ENCODE measurements at regions of chr19 and their contacts with region 1.

Region 1: DNA sequence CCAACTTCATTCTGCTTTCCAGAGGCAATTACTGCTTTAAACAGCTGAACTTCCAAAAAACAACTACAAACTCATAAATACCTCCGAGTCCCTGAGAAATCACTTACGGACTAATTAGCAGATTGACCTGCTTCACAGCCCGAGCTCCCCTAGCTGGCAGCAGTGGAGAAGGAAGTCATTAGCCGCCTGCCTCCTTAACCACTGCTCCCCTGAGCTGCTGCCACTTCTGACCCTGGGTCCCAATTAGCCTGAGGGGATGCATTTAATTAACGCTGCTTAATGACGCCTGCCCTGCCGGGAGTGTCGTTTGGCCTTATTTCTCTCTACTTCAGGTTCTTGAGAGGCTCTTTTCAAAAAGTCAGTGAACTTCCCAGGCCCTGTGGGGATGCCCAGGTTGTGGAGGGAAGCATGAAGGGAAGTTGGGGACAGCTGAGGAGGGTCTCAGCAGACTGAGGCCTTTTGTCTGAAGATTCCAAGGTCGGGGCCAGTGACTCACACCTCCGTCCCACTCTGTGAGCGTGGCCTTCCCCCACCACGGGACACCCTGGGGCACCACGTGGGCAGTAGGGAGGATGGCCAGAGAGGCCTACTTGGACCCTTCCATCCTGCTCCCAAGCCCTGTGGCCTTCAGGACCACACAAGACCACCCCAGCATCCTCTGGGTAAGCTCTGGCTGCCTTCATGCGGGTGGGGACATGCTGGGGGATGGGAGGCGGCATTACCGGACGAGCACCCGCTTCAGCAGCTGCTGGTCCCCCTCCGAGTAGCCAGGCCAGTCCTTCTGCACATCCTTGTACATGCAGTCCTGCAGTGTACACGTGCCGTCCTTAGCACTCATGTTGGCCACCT is 19.8 kb upstream of the ISYNA1 start:
- DNase-seq: no peak
- H3K4me3 ChIP-seq: no peak overlapping the region
- H3K27ac ChIP-seq: no peak overlapping the region
- H3K4me1 ChIP-seq: peaks cover 9 to 15% of the 10 kb centered on the region in 2 experiments; a peak in 3 of 4 replicates
- H3K27me3 ChIP-seq: no peaks in the 10 kb centered on the region
- CTCF ChIP-seq: no peak
- EP300 ChIP-seq: no peak
- RAD21 ChIP-seq: no peak

Region 2: DNA sequence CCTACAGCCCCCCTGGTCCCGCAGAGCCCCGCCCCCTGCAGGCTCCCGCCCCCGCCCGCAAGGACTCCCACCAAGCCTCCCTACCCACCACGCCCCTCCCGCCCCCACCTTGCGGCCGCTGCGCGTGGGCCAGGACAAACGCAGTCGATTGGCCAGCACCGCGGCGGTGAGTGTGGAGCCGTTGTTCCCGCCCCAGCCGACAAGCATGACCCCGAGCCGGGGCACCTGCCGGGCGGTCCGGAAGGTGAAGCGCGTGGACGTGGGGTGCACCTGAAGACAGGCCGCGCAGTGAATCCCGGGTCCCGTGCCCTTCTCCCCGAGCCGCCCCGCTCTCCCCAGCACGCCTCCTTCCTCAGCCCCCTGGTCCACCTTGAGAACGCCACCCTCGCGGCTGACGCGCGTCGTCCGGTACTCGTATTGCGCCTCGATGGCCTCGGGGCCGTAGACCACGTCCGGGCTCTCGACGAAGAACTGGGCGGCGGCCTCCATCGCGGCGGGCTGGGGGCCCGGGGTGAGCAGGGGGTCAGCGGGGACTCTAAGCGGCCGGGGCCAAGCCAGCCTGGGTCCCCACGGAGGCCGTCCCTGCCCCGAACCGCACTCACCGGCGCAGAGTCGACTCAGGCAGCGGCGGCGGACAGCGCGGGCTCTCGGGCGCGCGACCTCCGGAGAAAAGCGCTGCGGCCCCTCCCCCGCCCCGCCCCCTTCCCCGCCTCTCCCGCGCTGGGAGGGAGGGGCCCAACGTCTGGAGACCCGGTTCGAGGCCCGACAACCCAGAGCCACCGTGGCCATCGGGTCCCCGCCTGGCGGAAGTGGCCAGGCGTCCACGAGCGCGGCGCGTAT is 20.0 kb before region 1 on chr19 and contains the start of gene ISYNA1:
- CTCF ChIA-PET with region 1: interaction called, 215 read pairs
- POLR2A ChIA-PET with region 1: no interaction called
- DNase-seq: peak; percentile 94
- H3K4me3 ChIP-seq: peak within 1 kb of the TSS; percentile 62 to 65
- H3K27ac ChIP-seq: peak within 1 kb of the TSS; percentile 32 to 82; a peak in 3 of 4 replicates
- H3K4me1 ChIP-seq: peaks cover 0 to 25% of the 10 kb centered on the region in 2 experiments; a peak in 2 of 4 replicates
- H3K27me3 ChIP-seq: no peaks in the 10 kb centered on the region
- CTCF ChIP-seq: no peak
- EP300 ChIP-seq: no peak
- RAD21 ChIP-seq: no peak
- polyA plus RNA-seq, gene ISYNA1: 48.0 and 49.4 TPM in 2 replicates

Region 3: GRCh38 chr19:18478569-18479311 is 21.0 kb after region 1 on chr19:
- CTCF ChIA-PET with region 1: interaction called, 63 read pairs
- POLR2A ChIA-PET with region 1: no interaction called
- DNase-seq: peak; percentile 70
- H3K4me3 ChIP-seq: no peak overlapping the region
- H3K27ac ChIP-seq: peak overlapping the region; percentile 60 to 63
- H3K4me1 ChIP-seq: peaks cover 21 to 28% of the 10 kb centered on the region in 2 experiments; a peak in 2 of 4 replicates
- H3K27me3 ChIP-seq: no peaks in the 10 kb centered on the region
- CTCF ChIP-seq: no peak
- EP300 ChIP-seq: no peak
- RAD21 ChIP-seq: no peak

Region 4: DNA sequence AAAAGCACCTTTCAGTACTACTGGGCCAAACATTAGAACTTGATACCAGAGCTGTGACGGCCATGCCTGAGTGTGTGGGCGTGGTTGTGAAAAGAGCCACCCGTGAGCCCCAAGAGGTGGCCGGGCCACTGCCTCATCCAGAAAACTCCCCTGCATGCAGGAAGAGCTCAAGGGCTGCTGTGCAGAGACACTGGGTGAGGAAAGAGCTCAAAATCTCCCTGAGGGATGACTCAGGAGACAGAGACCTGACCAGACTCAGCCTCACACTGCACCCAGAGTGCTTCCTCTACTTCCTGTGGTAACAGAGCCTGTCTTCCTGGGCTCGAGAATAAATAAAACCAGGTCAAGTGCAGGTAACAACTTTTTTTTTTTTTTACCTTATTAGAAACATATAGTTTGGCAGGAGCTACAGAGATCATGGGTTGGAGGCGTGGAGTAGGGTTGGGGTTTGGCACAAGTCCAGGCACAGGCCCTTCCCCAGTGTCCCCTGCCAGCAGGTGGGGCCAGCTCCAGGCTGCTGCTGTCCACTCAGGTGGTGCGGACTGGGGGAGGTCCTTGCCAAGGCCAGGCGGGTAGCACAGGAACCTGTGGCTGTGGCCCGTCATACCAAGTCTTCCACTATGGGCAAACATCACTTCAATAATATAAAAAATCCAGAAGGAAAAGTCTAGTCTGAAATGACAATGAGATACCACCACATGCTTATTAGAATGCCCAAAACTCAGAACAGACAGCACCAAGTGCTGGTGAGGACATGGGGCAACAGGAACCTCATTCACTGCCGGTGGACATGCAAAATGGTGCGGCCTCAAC is 38.7 kb after region 1 on chr19:
- CTCF ChIA-PET with region 1: interaction called, 14 read pairs
- POLR2A ChIA-PET with region 1: interaction called, 4 read pairs
- DNase-seq: no peak
- H3K4me3 ChIP-seq: no peak overlapping the region
- H3K27ac ChIP-seq: peak overlapping the region; percentile 6 to 20; a peak in 3 of 4 replicates
- H3K4me1 ChIP-seq: peaks cover 11 to 50% of the 10 kb centered on the region in 2 experiments; a peak in 2 of 4 replicates
- H3K27me3 ChIP-seq: no peaks in the 10 kb centered on the region
- CTCF ChIP-seq: no peak
- EP300 ChIP-seq: no peak
- RAD21 ChIP-seq: no peak

Region 5: DNA sequence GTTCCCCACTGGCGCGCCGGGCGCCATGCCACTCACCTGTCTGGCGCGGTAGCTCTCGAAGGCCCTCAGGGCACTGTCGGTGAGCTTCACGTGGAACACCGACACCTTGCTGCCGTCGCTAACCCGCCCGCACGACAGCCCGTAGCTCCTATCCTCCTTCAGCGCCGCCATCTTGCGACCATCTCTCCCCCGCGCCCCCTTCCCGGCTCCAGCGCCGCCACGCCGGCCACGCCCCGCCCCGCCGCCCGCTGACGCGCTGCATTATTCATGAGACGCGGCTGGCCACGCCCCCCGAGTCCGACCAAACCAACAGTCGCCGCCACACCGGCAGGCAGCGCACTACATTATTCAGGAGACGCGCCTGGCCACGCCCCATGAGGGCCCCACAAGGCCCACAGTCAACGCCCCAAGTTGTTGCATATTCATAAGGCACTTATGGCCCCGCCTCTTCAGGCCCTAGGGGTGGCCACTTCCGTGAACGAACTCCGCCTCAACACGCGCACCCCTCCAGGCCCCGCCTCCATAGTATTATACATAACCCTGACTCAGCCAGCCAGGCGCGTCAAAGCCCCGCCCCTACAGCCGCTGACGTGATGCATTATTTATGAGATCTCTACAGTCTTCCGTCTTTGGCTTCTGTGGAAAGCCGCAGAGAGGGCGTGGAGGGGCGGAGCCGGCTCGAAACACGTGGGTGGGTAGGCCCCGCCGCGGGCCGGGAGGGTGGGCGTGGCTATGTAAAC is 64.3 kb after region 1 on chr19 and contains the start of gene ELL:
- CTCF ChIA-PET with region 1: interaction called, 29 read pairs
- POLR2A ChIA-PET with region 1: no interaction called
- DNase-seq: peak; percentile 96
- H3K4me3 ChIP-seq: peak within 1 kb of the TSS; percentile 73 to 97
- H3K27ac ChIP-seq: peak within 1 kb of the TSS; percentile 72 to 95
- H3K4me1 ChIP-seq: peaks cover 4 to 11% of the 10 kb centered on the region in 2 experiments; a peak in 1 of 4 replicates
- H3K27me3 ChIP-seq: no peaks in the 10 kb centered on the region
- CTCF ChIP-seq: no peak
- EP300 ChIP-seq: no peak
- RAD21 ChIP-seq: no peak
- polyA plus RNA-seq, gene ELL: 3.6 and 7.4 TPM in 2 replicates

Measured in SK-N-SH (cell line).